Activated naive CD4-positive, alpha-beta T cell treated with anti-CD3 and anti-CD28 coated beads, Interleukin-2, amount 10 ng/mL, durations not matched to agents 7 days and 5 days (primary cell): ENCODE measurements at regions of chr3 and their contacts with region 1.

Region 1: DNA sequence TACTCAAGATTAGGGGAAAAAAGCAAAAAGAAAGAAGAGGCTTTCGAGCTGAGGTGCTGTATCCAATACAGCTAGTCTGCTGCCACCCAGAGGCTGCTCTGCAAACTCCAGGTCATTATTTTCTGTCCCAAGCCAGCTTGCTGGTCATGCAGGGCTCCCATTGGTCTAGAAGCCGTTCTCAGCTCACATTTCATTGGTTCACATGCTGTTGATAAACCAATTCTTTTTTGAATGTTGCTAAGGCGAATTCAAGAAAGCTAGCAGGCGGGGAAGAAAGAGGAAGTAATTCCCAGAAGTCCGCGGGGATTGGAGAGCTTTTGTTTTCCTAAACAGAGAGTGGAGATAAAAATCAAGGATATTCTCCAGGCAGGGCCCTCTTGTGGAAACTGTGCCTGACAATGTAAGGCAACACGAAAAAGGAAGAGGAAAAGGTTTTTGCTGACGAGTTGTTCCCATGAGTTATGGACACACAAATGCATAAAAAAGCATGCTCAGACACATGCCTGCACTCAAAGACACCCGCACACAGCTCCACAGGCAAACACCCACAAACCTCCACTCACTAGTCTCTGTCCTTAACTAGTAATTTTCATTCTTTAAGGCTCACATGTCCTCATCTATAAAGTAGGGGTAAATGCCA is 33.4 kb downstream of the FSTL1 start:
- DNase-seq: peak; percentile 94
- H3K4me3 Mint-ChIP-seq: peak overlapping the region; percentile 75
- H3K27ac Mint-ChIP-seq: no peak overlapping the region
- H3K4me1 Mint-ChIP-seq: peaks cover 19% of the 10 kb centered on the region
- H3K27me3 Mint-ChIP-seq: peaks cover 8% of the 10 kb centered on the region

Region 2: GRCh38 chr3:120227710-120228347 is 189.6 kb before region 1 on chr3:
- CTCF ChIA-PET with region 1: no interaction called
- DNase-seq: no peak
- H3K4me3 Mint-ChIP-seq: no peak overlapping the region
- H3K27ac Mint-ChIP-seq: no peak overlapping the region
- H3K4me1 Mint-ChIP-seq: peaks cover 3% of the 10 kb centered on the region
- H3K27me3 Mint-ChIP-seq: peaks cover 7% of the 10 kb centered on the region

Region 3: GRCh38 chr3:120245386-120245785 is 172.0 kb before region 1 on chr3:
- CTCF ChIA-PET with region 1: interaction called, 123 read pairs
- DNase-seq: no peak
- H3K4me3 Mint-ChIP-seq: no peak overlapping the region
- H3K27ac Mint-ChIP-seq: no peak overlapping the region
- H3K4me1 Mint-ChIP-seq: no peaks in the 10 kb centered on the region
- H3K27me3 Mint-ChIP-seq: peaks cover 22% of the 10 kb centered on the region

Region 4: GRCh38 chr3:120404876-120405275 is 12.5 kb before region 1 on chr3:
- CTCF ChIA-PET with region 1: interaction called, 15 read pairs
- DNase-seq: no peak
- H3K4me3 Mint-ChIP-seq: no peak overlapping the region
- H3K27ac Mint-ChIP-seq: no peak overlapping the region
- H3K4me1 Mint-ChIP-seq: no peaks in the 10 kb centered on the region
- H3K27me3 Mint-ChIP-seq: peaks cover under 1% of the 10 kb centered on the region

Region 5: GRCh38 chr3:120567370-120568201 is 150.2 kb after region 1 on chr3:
- CTCF ChIA-PET with region 1: interaction called, 22 read pairs
- DNase-seq: no peak
- H3K4me3 Mint-ChIP-seq: no peak overlapping the region
- H3K27ac Mint-ChIP-seq: no peak overlapping the region
- H3K4me1 Mint-ChIP-seq: no peaks in the 10 kb centered on the region
- H3K27me3 Mint-ChIP-seq: peaks cover 4% of the 10 kb centered on the region

Region 6: GRCh38 chr3:120688121-120688520 is 270.7 kb after region 1 on chr3:
- CTCF ChIA-PET with region 1: no interaction called
- DNase-seq: no peak
- H3K4me3 Mint-ChIP-seq: no peak overlapping the region
- H3K27ac Mint-ChIP-seq: no peak overlapping the region
- H3K4me1 Mint-ChIP-seq: no peaks in the 10 kb centered on the region
- H3K27me3 Mint-ChIP-seq: no peaks in the 10 kb centered on the region